PC-3 (cell line): ENCODE measurements at regions of chr3 and their contacts with region 1.

Region 1: GRCh38 chr3:184275961-184276910 is at the start of gene ECE2:
- DNase-seq: no peak
- ATAC-seq: no peak; the same call in 1 of the 2 replicates
- H3K4me3 ChIP-seq: no peak within 1 kb of the TSS
- H3K27ac ChIP-seq: no peak within 1 kb of the TSS
- H3K4me1 ChIP-seq: no peaks in the 10 kb centered on the region
- H3K27me3 ChIP-seq: peaks cover 9% of the 10 kb centered on the region; the same call in 1 of the 2 replicates
- CTCF ChIP-seq: no peak
- total RNA-seq, gene ECE2: not detected in 2 replicates

Region 2: GRCh38 chr3:183895296-183895695 is 380.9 kb before region 1 on chr3:
- CTCF ChIA-PET with region 1: no interaction called
- POLR2A ChIA-PET with region 1: interaction called, 19 read pairs
- intact Hi-C with region 1: no loop called
- DNase-seq: peak; percentile 71
- ATAC-seq: peak; percentile 67
- H3K4me3 ChIP-seq: no peak overlapping the region
- H3K27ac ChIP-seq: no peak overlapping the region
- H3K4me1 ChIP-seq: no peaks in the 10 kb centered on the region
- H3K27me3 ChIP-seq: no peaks in the 10 kb centered on the region
- CTCF ChIP-seq: peak; percentile 88

Region 3: DNA sequence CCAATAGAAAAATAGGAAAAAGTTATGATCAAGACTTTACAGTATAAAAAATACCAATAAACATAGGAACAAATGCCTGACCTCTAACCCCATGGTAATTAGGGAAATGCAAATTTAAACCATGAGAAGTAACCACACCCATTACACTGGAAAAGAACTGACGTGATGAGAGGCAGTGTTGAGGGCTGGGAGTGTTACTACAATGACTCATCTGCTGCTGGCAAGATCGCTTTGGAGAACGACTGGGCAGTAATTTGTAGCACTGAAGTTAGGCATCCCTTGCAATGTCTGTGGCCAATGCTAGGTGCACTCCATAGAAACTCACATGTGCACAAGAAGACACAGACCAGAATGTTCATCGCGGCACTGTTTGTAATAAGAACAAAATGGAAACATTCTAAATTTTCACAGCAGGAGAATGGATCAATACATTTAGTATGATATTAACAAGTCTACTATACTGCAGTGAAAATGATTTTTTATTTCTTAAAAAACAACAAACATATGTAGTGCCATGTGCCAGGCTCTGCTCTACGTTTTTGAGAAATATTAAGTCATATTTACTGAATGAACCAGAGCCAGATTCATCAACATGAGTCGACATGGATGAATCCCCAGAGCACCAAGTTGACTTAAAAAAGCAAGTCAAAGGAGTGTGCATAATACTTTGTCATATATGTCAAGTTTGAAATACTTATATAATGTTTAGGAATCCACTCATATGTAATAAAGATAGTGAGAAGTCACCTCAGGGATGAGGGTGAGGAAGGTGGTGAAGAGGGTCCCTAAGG is 247.8 kb after region 1 on chr3:
- CTCF ChIA-PET with region 1: no interaction called
- POLR2A ChIA-PET with region 1: no interaction called
- intact Hi-C with region 1: no loop called
- DNase-seq: peak; percentile 51
- ATAC-seq: peak; percentile 84
- H3K4me3 ChIP-seq: no peak overlapping the region
- H3K27ac ChIP-seq: no peak overlapping the region
- H3K4me1 ChIP-seq: peaks cover 5% of the 10 kb centered on the region; the same call in 1 of the 2 replicates
- H3K27me3 ChIP-seq: peaks cover 62% of the 10 kb centered on the region
- CTCF ChIP-seq: no peak

Region 4: DNA sequence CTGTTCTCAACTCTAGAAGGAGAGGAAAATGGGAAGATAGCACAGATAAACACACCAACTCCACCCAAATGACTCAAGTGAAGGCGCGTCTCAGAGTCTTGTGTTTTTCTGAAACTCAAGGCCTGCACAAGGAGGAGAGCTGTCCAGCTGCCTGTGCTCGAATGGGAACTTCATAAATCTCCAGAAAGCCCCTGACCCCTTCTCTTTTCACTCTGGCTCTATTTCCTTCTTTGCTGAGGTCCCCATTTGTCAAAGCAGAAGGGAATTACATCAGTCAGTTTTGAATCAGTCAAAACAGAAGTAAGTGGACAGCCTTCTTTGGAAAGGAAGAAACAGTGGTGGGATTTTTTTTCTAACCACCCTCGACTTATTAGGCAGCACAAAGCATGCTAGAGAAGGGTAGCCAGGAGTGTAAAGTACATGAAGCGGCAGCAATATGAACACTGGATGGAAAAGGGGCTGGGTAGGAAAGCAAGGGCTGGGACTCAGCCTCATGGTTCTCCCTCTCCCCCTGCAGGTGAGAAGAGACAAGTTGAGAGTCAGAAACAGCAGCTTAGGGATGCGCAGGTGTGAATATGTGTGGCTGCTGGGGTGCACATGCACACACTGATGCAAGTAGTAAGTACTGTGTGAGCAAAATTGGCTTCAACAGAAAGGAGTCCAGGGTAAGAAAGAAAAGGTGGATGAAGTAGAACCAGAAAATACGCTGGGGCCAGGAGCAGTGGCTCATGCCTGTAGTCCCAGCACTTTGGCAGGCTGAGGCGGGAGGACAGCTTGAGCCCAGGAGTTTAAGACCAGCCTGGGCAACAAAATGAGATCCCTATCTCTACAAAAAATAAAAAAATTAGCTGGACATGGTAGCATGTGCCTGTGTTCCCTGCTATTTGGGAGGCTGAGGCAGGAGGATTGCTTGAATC is 472.2 kb after region 1 on chr3:
- CTCF ChIA-PET with region 1: no interaction called
- POLR2A ChIA-PET with region 1: no interaction called
- intact Hi-C with region 1: no loop called
- DNase-seq: peak; percentile 70
- ATAC-seq: peak; percentile 99
- H3K4me3 ChIP-seq: no peak overlapping the region
- H3K27ac ChIP-seq: no peak overlapping the region
- H3K4me1 ChIP-seq: peaks cover 8% of the 10 kb centered on the region
- H3K27me3 ChIP-seq: 0 out of 2 replicates have a peak, but pooled peaks cover 4% of the 10 kb centered on the region
- CTCF ChIP-seq: peak; percentile 79